Activated CD8-positive, alpha-beta T cell treated with anti-CD3 and anti-CD28 coated beads, Interleukin-2, amount 10 ng/mL, durations not matched to agents 7 days and 5 days (primary cell): ENCODE measurements at regions of chr1 and their contacts with region 1.

Region 1: DNA sequence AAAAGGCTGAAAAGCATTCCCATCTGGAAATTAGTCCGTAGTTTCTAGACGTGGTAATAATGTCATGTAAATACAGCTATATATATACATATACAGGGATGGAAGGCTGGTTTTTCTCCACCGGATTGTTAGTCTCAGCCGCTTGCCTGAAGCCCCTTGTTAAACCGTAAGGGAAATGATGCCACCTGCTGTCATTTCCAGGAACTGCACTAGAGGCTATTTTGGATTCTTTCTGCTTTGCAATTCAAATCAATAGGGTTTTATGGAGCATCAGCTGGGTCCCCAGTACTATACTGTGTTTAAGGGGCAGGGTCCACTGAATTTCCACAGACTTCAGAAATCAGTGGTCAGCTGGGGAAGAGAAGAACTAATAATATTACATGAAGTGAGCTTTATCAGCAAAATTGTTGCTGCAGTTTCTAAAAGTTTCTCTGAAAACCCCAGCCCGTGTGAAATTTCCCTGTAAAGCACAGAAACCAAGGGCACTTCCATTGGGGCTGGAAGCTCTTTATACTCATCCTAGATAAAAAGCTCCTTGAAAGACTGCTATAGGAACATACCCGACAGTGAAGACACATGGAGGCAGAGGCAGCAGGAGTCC is 33.8 kb upstream of the MPZL1 start:
- DNase-seq: peak; percentile 88
- ATAC-seq: peak; percentile 71
- H3K4me3 Mint-ChIP-seq: no peak overlapping the region
- H3K27ac Mint-ChIP-seq: peak overlapping the region; percentile 13
- H3K4me1 Mint-ChIP-seq: peaks cover 10% of the 10 kb centered on the region
- H3K27me3 Mint-ChIP-seq: no peaks in the 10 kb centered on the region

Region 2: DNA sequence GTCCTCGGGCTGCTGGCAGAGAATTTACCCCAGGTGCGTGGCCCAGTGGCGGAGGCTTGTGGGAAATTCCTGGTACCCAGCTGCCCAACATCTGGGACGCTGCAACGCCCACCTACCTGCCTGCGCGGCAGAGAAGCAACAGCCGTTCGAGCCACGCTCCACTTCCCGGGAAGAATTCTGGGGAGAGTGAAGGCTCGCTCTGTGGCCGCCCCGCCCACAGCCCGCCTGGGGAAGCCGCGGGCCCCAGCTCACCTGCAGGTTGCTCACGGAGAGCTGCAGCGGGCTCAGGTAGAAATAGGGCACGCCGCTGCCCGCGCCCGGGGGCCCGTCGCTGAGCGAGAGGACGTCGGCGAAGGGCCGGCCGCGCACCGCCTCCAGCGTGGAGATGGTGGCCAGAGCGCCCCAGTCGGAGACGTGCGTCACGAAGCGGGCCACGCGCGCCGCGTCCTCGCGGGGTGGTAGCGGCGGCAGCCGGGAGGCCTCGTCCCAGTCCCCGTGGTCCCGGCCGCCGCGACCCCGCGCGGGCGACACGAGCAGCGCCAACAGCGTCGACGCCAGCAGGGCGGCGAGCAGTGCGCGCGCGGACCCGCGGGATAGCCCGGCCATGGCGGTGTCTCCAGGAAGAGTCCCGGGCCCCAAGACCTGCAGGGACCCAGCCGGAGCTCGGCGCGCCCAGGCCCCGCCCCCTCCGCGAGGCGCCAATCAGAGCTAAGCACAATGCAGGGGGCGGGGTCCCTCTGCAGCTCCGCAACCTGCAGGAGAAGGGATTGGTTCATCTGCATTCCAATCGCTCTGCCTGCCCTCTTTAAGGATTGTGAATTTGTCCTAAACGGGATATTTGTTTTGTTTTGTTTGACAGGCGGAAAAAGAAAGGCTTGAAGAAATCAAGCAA is 134.6 kb before region 1 on chr1 and contains the start of gene CREG1:
- CTCF ChIA-PET with region 1: interaction called, 17 read pairs
- POLR2A ChIA-PET with region 1: no interaction called
- DNase-seq: peak; percentile 90
- ATAC-seq: peak; percentile 100
- H3K4me3 Mint-ChIP-seq: peak within 1 kb of the TSS; percentile 84
- H3K27ac Mint-ChIP-seq: peak within 1 kb of the TSS; percentile 47
- H3K4me1 Mint-ChIP-seq: peaks cover 28% of the 10 kb centered on the region
- H3K27me3 Mint-ChIP-seq: peaks cover 9% of the 10 kb centered on the region
- total RNA-seq, gene CREG1: 7.3 to 7.7 TPM

Region 3: GRCh38 chr1:167578939-167579521 is 109.0 kb before region 1 on chr1:
- CTCF ChIA-PET with region 1: no interaction called
- POLR2A ChIA-PET with region 1: no interaction called
- DNase-seq: no peak
- ATAC-seq: no peak
- H3K4me3 Mint-ChIP-seq: no peak overlapping the region
- H3K27ac Mint-ChIP-seq: no peak overlapping the region
- H3K4me1 Mint-ChIP-seq: no peaks in the 10 kb centered on the region
- H3K27me3 Mint-ChIP-seq: peaks cover 33% of the 10 kb centered on the region

Region 4: DNA sequence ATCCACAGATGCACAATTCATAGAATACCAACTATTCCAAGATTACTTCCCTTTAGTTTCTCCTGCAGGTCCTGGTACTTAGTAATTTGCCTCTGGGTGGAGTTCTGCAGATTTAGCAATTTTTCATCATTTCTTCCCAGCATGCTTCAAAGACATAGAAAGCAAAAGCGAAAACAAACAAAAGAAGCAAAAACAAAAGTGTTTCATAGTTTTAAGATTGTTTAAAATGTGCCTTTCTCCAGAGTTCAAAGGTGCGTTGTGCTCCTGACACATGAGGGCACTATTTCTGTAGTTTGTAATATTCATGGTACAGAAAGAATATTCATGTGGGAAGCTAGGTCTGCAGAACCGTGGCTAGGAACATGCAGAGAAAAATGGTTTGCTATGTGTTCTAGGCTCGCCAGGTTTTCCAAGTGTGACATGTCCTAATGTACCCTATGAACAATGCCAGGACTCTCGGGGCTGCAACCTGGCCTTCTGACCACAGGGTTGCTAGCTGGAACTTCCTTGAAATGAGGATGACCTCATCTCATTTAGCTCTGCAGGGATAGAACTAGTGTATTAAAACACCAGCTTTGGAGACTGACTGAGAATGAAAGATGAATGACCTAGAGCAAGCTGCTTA is 88.0 kb before region 1 on chr1:
- CTCF ChIA-PET with region 1: interaction called, 124 read pairs
- POLR2A ChIA-PET with region 1: interaction called, 9 read pairs
- DNase-seq: peak; percentile 71
- ATAC-seq: peak; percentile 84
- H3K4me3 Mint-ChIP-seq: peak overlapping the region; percentile 40
- H3K27ac Mint-ChIP-seq: peak overlapping the region; percentile 83
- H3K4me1 Mint-ChIP-seq: peaks cover 42% of the 10 kb centered on the region
- H3K27me3 Mint-ChIP-seq: peaks cover 2% of the 10 kb centered on the region

Region 5: GRCh38 chr1:167635156-167635648 is 52.8 kb before region 1 on chr1:
- CTCF ChIA-PET with region 1: interaction called, 28 read pairs
- POLR2A ChIA-PET with region 1: interaction called, 4 read pairs
- DNase-seq: no peak
- ATAC-seq: no peak
- H3K4me3 Mint-ChIP-seq: no peak overlapping the region
- H3K27ac Mint-ChIP-seq: no peak overlapping the region
- H3K4me1 Mint-ChIP-seq: peaks cover 80% of the 10 kb centered on the region
- H3K27me3 Mint-ChIP-seq: no peaks in the 10 kb centered on the region

Region 6: DNA sequence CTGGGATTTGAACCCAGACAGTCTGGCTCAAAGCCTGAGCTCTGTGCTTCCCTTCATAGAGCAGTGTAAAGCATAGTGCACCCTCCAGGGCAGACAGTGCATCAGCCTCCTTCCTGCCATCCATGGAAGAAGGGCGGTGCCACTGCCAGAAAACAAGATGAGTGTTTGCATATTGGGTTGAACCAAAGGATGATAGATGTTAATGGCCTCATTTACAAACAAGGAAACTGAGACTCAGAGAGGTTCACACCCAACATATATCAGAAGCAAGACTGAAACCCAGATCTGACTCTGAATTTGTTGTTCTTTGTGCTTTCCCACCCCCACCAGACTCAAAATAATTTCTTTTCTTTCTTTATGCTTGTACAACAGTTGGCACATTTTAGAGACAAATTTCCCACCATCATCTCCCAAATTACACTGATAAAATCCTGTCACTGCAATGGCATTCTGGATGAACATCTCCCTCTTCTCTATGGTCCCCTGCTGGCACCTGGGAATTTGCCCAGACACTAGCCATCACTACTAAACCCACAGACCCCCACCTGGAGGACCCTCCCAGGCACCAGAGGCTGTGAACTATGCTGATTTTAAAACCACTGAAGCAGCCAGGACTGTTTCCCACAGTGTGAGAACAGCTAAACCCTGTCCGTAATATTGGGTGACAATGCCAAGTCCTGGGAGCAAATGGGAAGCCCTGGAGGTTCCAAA is 11.7 kb before region 1 on chr1:
- CTCF ChIA-PET with region 1: interaction called, 19 read pairs
- POLR2A ChIA-PET with region 1: no interaction called
- DNase-seq: no peak
- ATAC-seq: no peak
- H3K4me3 Mint-ChIP-seq: no peak overlapping the region
- H3K27ac Mint-ChIP-seq: peak overlapping the region; percentile 12
- H3K4me1 Mint-ChIP-seq: peaks cover 22% of the 10 kb centered on the region
- H3K27me3 Mint-ChIP-seq: no peaks in the 10 kb centered on the region

Region 7: GRCh38 chr1:167829868-167830267 is 141.8 kb after region 1 on chr1:
- CTCF ChIA-PET with region 1: no interaction called
- POLR2A ChIA-PET with region 1: no interaction called
- DNase-seq: no peak
- ATAC-seq: no peak
- H3K4me3 Mint-ChIP-seq: no peak overlapping the region
- H3K27ac Mint-ChIP-seq: no peak overlapping the region
- H3K4me1 Mint-ChIP-seq: no peaks in the 10 kb centered on the region
- H3K27me3 Mint-ChIP-seq: peaks cover 8% of the 10 kb centered on the region